Endothelial cell of umbilical vein (primary cell): ENCODE measurements at regions of chr9 and their contacts with region 1.

Region 1: GRCh38 chr9:91623004-91623403 is 199.4 kb upstream of the NFIL3 start:
- DNase-seq: no peak
- H3K4me3 ChIP-seq: no peak overlapping the region
- H3K27ac ChIP-seq: no peak overlapping the region
- H3K4me1 ChIP-seq: no peaks in the 10 kb centered on the region
- H3K27me3 ChIP-seq: no peaks in the 10 kb centered on the region
- CTCF ChIP-seq: no peak
- POLR2A ChIP-seq: no peak

Region 2: GRCh38 chr9:91546574-91546973 is 76.4 kb before region 1 on chr9:
- CTCF ChIA-PET with region 1: no interaction called
- POLR2A ChIA-PET with region 1: no interaction called
- dilution Hi-C with region 1: no loop called
- intact Hi-C with region 1: loop called (anchors 2 kb)
- DNase-seq: no peak
- H3K4me3 ChIP-seq: no peak overlapping the region
- H3K27ac ChIP-seq: no peak overlapping the region
- H3K4me1 ChIP-seq: no peaks in the 10 kb centered on the region
- H3K27me3 ChIP-seq: no peaks in the 10 kb centered on the region
- CTCF ChIP-seq: no peak
- POLR2A ChIP-seq: no peak

Region 3: GRCh38 chr9:91766315-91767069 is 143.5 kb after region 1 on chr9:
- CTCF ChIA-PET with region 1: no interaction called
- POLR2A ChIA-PET with region 1: no interaction called
- dilution Hi-C with region 1: no loop called
- intact Hi-C with region 1: no loop called
- DNase-seq: no peak
- H3K4me3 ChIP-seq: no peak overlapping the region
- H3K27ac ChIP-seq: no peak overlapping the region
- H3K4me1 ChIP-seq: no peaks in the 10 kb centered on the region
- H3K27me3 ChIP-seq: no peaks in the 10 kb centered on the region
- CTCF ChIP-seq: no peak
- POLR2A ChIP-seq: no peak